Sciatic nerve (tissue), 2 donors: ENCODE measurements at regions of chr16 and their contacts with region 1.

Region 1: GRCh38 chr16:61713787-61714186 is 322.5 kb downstream of the CDH8 start:
- DNase-seq: no peak
- ATAC-seq: no peak

Region 2: GRCh38 chr16:60788631-60789030 is 925.2 kb before region 1 on chr16:
- intact Hi-C with region 1: loop called (anchors 5 kb)
- DNase-seq: no peak
- ATAC-seq: no peak